ENCODE measurements at regions of chr7 and their contacts with region 1.

Region 1: DNA sequence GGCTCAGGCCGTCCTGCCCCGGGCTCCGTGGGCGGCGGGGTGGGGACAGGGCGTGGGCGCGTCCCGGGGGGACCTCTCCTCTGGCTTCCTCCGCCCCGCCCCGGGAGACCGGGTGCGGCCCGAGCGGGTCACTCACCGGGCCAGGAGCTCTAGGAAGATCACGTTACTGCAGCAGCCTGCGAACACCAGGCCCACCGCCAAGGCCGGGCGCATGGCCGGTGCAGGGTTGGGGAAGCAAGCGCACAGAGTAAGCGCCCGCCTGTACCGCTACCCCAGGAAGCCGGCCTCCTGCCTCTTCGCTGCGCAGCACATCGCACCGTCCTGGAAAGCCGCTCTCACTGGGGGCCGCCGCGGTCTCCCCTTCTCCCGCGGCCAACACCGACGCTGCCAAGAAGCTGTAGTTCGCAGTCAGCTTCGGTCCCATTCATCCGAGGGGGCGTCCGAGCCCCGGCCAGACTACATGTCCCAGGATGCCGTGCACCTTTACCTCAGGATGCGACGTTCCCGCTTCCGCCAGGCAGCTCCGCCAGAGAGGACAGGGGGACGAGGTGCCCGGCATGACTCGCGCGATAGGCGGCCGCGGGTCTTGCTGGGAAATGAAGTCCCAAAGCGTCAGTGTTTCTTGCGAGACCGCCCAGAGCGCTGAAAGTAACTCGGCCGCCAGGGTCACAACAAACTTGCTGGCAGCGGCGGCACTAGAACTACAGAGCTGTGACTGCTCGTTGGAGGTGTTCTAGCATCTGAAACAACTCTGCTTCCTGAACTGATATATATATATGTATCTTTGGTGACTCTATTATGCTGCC is at the start of gene SLC35B4:
- DNase-seq: peak; percentile 96
- ATAC-seq: peak; percentile 99
- H3K4me3 ChIP-seq: peak within 1 kb of the TSS; percentile 77 to 91 (median 87)
- H3K27ac ChIP-seq: peak within 1 kb of the TSS; percentile 81
- H3K4me1 ChIP-seq: peaks cover 21% of the 10 kb centered on the region
- H3K27me3 ChIP-seq: peaks cover 0 to 15% of the 10 kb centered on the region in 2 experiments; a peak in 2 of 5 replicates
- CTCF ChIP-seq: peak; percentile 41; the same call in 1 of the 2 replicates
- EP300 ChIP-seq: 0 out of 4 replicates have a peak, but pooled peaks of 1 of the 2 experiments have one; percentile 4
- POLR2A ChIP-seq: peak; percentile 63 to 68; a peak in 3 of 4 replicates
- RAD21 ChIP-seq: peak; percentile 50; the same call in 1 of the 2 replicates
- total RNA-seq, gene SLC35B4: 10.8 and 17.1 TPM in 2 replicates

Region 2: GRCh38 chr7:134293002-134293740 is 23.6 kb before region 1 on chr7:
- CTCF ChIA-PET with region 1: no interaction called
- POLR2A ChIA-PET with region 1: interaction called, 13 read pairs
- in situ Hi-C with region 1: no loop called
- intact Hi-C with region 1: loop called (anchors 1 kb)
- DNase-seq: peak; percentile 95
- ATAC-seq: peak; percentile 99
- H3K4me3 ChIP-seq: no peak overlapping the region
- H3K27ac ChIP-seq: peak overlapping the region; percentile 62
- H3K4me1 ChIP-seq: peaks cover 19% of the 10 kb centered on the region
- H3K27me3 ChIP-seq: no peaks in the 10 kb centered on the region
- CTCF ChIP-seq: no peak
- EP300 ChIP-seq: peak in 1 of 2 experiments; percentile 65; a peak in 2 of 4 replicates
- POLR2A ChIP-seq: no peak
- RAD21 ChIP-seq: 0 out of 2 replicates have a peak, but pooled peaks have one; percentile 36

Region 3: DNA sequence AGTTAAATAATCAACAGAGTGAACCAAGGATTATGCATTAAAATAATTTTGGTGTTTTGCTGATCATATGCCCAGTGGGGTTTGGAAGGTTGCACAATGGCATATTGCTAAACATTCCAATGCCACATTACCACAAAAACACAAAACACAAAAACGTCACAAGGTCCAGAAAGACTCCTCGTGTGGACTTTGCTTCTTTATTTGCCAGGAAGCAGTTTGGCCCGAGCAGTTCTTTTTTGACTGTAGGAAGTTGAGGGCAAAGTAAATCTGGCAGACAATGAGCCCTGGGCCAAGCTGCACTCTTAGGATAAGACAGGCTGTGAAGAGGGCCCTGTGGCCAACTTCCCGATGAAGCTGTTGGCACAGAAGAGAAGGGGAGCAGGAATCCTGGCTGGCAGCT is 39.2 kb after region 1 on chr7:
- CTCF ChIA-PET with region 1: no interaction called
- POLR2A ChIA-PET with region 1: interaction called, 10 read pairs
- in situ Hi-C with region 1: no loop called
- intact Hi-C with region 1: loop called (anchors 5 kb)
- DNase-seq: peak; percentile 66
- ATAC-seq: peak; percentile 41
- H3K4me3 ChIP-seq: no peak overlapping the region
- H3K27ac ChIP-seq: peak overlapping the region; percentile 37
- H3K4me1 ChIP-seq: peaks cover 69% of the 10 kb centered on the region
- H3K27me3 ChIP-seq: no peaks in the 10 kb centered on the region
- CTCF ChIP-seq: no peak
- EP300 ChIP-seq: peak in 1 of 2 experiments; percentile 41; a peak in 1 of 4 replicates
- POLR2A ChIP-seq: no peak
- RAD21 ChIP-seq: no peak

Region 4: GRCh38 chr7:134368851-134369552 is 52.3 kb after region 1 on chr7:
- CTCF ChIA-PET with region 1: no interaction called
- POLR2A ChIA-PET with region 1: interaction called, 3 read pairs
- in situ Hi-C with region 1: no loop called
- intact Hi-C with region 1: loop called (anchors 2 kb)
- DNase-seq: peak; percentile 87
- ATAC-seq: peak; percentile 80
- H3K4me3 ChIP-seq: no peak overlapping the region
- H3K27ac ChIP-seq: peak overlapping the region; percentile 41
- H3K4me1 ChIP-seq: peaks cover 65% of the 10 kb centered on the region
- H3K27me3 ChIP-seq: no peaks in the 10 kb centered on the region; a peak in 1 of 5 replicates
- CTCF ChIP-seq: no peak
- EP300 ChIP-seq: peak in 1 of 2 experiments; percentile 77; a peak in 2 of 4 replicates
- POLR2A ChIP-seq: no peak
- RAD21 ChIP-seq: no peak